ENCODE measurements at regions of chr10 and their contacts with region 1.

Region 1: DNA sequence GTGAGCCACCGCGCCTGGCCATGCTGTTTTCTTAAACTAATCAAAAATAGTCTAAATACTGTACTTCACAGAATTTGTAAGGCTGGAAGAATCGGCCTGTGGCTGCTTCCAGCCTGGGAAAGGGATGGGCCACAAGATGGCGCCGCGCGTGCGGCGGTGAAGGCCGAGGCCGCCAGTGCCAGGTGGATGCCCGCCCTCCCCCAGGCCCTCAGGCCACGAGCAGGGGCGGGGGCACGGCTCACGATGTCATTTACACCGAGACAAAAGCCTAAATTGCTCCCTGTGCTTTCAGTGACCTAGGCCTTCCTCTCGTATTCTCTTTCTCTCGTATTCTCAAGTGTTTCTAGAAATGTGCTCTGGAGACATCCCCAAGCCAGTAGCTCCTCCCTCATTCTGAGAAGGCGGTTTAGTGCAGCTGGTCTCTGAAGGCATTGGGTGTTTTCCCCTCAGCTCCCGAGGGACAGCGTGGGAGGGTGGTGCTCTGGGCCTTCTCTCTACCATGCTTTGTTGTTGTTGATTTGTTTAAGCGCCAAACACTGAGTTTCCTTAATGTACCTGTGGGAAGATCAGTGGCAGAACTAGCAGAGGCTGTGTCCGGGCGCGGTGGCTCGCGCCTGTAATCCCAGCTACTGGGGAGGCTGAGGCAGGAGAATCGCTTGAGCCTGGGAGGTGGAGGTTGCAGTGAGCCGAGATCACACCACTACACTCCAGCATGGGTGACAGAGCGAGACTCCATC is 68.4 kb downstream of the CDC123 start:
- DNase-seq: peak; percentile 93

Region 2: GRCh38 chr10:12221323-12222298 is 42.8 kb before region 1 on chr10:
- intact Hi-C with region 1: no loop called
- DNase-seq: no peak

Region 3: GRCh38 chr10:12322583-12323131 is 58.3 kb after region 1 on chr10:
- intact Hi-C with region 1: no loop called
- DNase-seq: peak; percentile 31

Region 4: DNA sequence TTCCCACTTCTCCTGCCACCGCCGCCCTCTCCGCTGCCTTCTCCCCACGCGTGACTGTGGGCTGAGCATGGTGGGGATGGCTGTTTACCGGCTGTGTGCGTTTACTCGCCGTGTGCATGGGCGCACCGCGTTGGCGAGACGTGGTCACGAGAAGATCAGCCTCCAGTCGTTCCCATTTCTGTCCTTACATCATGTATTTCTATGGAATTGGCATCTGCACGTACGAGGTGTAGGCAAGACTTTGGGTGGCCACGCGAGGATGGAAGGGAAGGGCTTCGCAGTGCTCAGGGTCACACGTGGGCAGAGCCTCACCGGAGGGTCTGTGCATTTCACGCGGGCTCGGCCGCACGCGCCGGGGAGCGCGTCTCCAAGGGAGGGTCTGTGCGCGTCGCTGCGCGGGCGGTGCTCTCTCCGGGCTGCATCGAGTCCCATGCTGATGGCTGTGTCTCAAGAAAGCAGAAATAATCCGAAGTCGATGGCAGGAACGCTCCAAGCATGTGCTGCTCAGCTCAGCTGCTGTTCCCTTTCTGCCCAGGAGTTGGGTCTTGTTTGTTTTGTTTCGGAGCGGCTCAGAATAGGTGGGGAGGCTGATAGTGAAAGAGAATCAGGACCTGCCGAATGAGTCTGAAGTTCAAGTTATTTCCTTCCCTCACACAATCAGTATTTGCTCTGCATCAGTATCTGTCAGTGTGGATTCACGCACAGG is 85.9 kb after region 1 on chr10:
- intact Hi-C with region 1: loop called in 1 of 2 experiments (anchors 10 kb)
- DNase-seq: no peak

Region 5: DNA sequence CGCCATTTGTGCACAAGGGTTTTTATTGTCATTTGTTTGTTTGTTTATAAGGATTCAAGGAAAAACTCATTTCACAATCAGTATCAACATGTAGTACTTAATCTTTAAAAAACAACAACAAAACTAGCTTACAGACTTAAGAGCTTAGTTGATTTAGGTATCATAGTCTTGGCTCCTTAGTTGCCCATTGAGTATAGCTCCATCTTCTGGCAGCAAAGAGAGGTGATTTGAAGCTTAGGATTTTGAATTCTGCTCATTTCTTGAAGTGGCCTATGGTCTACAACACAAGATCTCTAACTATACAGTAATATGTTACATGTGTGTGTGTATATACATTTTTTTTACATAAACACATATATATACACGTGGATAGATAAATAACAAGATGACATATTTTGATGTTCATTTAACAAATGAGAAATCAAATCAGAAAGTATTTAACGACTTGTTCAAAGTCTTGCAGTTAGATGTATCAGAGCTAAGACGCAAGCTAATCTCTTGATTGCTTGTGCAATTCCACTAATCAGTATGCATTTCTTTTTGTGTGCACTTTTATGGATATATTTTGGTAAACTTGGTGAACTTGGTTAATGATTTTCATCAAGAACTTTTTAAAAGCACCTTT is 392.3 kb after region 1 on chr10:
- intact Hi-C with region 1: loop called in 1 of 2 experiments (anchors 5 kb)
- DNase-seq: no peak

Region 6: GRCh38 chr10:12710594-12711349 is 446.4 kb after region 1 on chr10:
- intact Hi-C with region 1: loop called (anchors 5 to 10 kb)
- DNase-seq: peak; percentile 93

Region 7: DNA sequence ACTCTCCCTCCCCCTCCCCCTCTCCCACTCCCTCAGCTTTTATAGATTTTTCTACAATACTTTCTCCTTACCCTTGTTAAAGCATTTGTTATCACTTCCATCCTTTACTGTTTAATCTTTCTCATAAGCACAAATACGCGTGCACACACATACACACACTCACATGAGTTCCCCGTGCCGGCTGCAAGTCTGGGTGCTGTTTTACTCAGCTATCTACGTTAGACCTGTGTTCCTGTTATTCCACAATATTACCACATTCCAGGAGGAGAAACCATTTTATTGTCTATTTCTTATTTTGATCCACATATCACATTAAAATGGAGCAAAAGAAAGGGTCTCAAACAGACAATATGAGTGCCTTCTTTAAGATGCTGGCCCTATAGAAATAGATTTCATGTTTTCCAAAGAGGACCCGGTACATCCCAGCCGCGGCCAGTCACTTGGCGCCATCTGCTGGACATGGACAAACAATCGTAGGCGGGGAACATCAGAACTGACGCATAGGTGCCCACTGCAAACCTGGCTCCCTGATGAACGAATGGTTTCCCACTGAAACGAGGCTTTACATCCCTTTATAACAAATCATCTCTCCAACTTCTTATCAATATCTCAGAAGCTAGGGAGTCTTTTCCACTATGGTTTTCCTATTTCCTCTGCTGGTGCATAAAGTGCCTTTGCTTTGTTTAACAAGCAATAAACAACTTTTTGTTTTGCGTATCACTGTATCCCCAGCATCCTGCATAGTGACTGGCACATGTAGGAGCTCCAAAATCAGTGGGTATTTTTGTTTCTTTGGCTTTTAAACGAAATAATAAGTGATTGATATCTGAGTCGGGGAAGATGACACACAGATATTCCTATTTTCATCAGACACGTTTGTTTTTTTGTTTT is 810.4 kb after region 1 on chr10:
- intact Hi-C with region 1: loop called (anchors 10 kb)
- DNase-seq: peak; percentile 90

Measured in posterior vena cava (tissue), 2 donors.